Activated CD4-positive, alpha-beta memory T cell treated with anti-CD3 and anti-CD28 coated beads, Interleukin-2, amount 10 ng/mL, durations not matched to agents 7 days and 5 days (primary cell): ENCODE measurements at regions of chr19 and their contacts with region 1.

Region 1: DNA sequence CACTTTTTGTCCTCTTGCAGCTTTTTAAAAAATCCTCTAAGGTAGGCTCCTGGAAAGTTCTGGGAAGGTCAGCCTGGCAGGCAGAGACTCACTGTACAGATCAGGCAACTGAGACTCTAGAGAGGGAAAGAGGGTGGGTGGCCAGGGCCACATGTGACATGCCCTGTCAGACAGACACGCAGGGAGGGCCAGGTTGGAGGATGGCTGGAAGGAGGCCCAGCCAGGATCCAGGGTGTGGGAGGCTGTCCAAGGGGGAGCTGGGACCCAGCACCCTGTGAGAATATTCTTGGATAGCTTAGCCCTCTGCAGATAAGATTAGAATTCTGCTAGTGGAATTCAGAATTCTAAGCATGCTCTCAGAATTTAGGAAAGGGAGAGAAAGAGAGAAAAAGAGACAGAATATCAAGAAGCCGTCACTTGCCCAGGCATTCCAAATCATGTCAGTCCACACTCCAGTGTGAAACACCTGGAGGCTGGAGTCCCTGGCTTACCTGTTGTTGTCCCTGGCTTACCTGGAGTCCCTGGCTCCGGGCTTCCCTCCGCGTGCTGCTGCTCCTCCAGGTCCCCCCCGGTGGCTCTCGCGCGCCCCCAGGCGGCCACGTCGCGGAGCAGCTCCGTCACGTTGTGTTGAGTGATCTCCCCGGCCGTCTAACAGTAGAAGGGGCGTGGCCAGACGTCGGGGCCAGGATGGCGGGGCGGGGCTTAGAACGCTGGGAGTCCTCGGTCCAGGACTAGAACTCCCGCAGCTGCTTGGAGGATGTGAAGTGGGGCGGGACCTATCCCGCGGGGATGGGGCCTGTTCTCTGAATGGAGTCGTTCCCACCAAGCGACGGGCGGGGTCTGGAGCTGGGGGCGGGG is 2.8 kb upstream of the TNNI3 start:
- DNase-seq: peak; percentile 91
- H3K4me3 Mint-ChIP-seq: no peak overlapping the region
- H3K27ac Mint-ChIP-seq: no peak overlapping the region
- H3K4me1 Mint-ChIP-seq: peaks cover 3% of the 10 kb centered on the region
- H3K27me3 Mint-ChIP-seq: peaks cover 30% of the 10 kb centered on the region

Region 2: GRCh38 chr19:54882758-54883157 is 277.6 kb before region 1 on chr19:
- CTCF ChIA-PET with region 1: interaction called, 12 read pairs
- POLR2A ChIA-PET with region 1: interaction called, 3 read pairs
- DNase-seq: peak; percentile 21
- H3K4me3 Mint-ChIP-seq: peak overlapping the region; percentile 51
- H3K27ac Mint-ChIP-seq: peak overlapping the region; percentile 62
- H3K4me1 Mint-ChIP-seq: peaks cover 9% of the 10 kb centered on the region
- H3K27me3 Mint-ChIP-seq: peaks cover 8% of the 10 kb centered on the region

Region 3: DNA sequence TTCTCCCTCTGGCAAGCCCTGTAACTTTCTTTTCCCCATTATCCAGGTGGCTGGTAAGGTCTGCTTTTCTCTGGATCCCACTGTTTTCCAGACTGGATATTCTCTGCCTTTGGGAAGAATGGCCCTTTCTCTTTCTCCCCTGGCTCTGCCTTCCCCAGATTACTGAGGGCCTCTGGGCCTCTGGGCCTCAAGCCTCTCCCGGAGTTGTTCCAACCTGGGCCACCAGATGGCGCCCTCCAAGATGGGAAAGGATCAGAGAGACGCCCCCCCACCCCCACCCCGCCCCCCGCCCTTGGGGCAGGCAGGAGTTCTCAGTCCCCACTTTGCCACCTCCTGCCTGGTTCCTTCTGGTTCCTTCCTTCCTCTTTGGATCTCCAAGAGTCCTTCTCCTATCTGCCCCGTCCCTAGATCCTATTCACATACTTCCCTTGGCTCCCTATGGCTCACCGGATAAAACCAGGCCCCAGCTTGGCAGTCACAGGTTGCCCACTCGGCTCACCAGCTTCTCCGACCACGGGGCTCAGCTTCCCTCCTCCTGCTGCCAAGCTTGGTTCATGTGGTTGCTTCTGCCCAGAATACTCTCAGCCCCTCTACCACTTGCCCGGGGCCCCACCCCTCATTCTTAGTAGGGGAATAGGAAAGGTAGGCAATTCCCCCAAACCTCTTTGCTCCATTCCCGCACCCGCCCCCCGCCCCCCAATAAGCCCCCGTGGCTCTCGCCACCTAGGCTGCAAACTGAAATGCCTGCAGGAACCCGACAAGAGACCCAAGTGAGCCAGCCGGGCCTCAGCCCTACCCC is 71.6 kb before region 1 on chr19:
- CTCF ChIA-PET with region 1: interaction called, 10 read pairs
- POLR2A ChIA-PET with region 1: no interaction called
- DNase-seq: peak; percentile 79
- H3K4me3 Mint-ChIP-seq: no peak overlapping the region
- H3K27ac Mint-ChIP-seq: no peak overlapping the region
- H3K4me1 Mint-ChIP-seq: peaks cover 20% of the 10 kb centered on the region
- H3K27me3 Mint-ChIP-seq: peaks cover 42% of the 10 kb centered on the region

Region 4: DNA sequence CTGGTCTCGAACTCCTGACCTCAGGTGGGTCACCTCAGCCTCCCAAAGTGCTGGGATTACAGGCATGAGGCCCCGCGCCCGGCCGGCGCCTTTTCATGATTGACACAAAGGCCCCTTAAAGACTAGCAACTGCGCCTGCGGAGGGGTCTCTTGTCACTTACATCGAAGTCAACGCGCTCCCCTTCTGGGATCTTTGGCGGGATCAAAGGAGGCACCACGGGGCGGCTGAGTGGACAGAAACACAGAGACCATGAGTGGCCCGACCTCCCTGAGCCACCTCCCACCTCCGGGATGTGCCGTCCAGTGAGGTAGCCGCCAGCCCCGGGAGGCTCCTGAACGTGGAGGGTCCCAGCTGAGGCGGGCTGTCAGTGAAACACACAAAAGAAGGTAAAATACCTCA is 18.7 kb before region 1 on chr19:
- CTCF ChIA-PET with region 1: interaction called, 11 read pairs
- POLR2A ChIA-PET with region 1: no interaction called
- DNase-seq: no peak
- H3K4me3 Mint-ChIP-seq: no peak overlapping the region
- H3K27ac Mint-ChIP-seq: no peak overlapping the region
- H3K4me1 Mint-ChIP-seq: peaks cover 9% of the 10 kb centered on the region
- H3K27me3 Mint-ChIP-seq: peaks cover 25% of the 10 kb centered on the region